ENCODE measurements at regions of chr1 and their contacts with region 1.

Region 1: GRCh38 chr1:19563324-19564097 is 78.2 kb upstream of the CAPZB start:
- DNase-seq: peak; percentile 69 to 86 (median 81)
- ATAC-seq: peak; percentile 83 to 88 (median 86)
- H3K4me3 ChIP-seq: peak overlapping the region in 10 of 12 donors; percentile 6 to 48 (median 41)
- H3K27ac ChIP-seq: peak overlapping the region; percentile 29 to 89 (median 80)
- H3K4me1 ChIP-seq: peaks cover 3 to 30% (median 16%) of the 10 kb centered on the region in 12 donors
- H3K27me3 ChIP-seq: no peaks in the 10 kb centered on the region
- CTCF ChIP-seq: no peak
- POLR2A ChIP-seq: peak in 1 of 2 donors; percentile 26

Region 2: DNA sequence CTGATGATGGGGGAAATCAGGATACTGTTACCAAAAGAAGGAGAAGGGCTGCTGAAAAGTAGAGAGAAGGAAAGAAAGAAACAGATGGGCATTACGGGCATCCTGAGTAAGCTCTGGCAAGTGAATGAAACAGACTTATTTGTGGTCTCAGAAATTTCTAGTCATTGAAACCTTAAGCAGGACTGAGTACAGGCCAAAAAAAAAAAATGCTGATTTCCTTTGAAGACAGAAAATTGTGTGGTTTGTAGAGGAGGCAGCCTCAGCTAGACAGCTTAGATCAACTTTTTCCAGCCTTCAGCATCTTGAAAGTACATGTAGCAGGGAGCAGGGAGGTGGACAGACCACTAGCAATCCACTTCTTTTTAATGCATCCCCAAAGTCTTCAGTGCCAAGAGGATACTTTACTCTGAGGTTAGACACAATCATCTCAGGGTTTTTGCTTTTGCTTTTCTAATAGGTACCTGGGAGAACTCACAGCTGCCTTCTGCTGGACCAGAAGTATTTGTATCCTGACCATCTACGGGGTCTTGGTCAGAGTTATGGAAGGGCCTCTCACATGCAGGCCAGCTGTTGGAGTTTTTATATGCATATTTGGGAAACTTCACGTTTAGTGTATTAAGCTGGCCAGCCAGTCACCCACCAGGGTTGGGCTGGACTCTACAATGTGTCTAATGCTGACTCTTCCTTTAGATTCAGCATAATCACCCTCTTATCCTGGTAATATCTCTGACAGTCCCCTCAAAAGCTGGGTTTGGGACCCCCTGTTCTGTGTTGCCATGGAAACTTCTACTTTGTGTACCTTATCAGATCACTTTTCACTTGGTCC is 67.5 kb before region 1 on chr1:
- intact Hi-C with region 1: loop called in 1 of 10 experiments (anchors 10 kb)
- DNase-seq: no peak
- ATAC-seq: peak in 3 of 4 donors; percentile 12 to 30 (median 22)
- H3K4me3 ChIP-seq: no peak overlapping the region
- H3K27ac ChIP-seq: peak overlapping the region; percentile 12 to 95 (median 78)
- H3K4me1 ChIP-seq: peaks cover 0 to 27% (median 22%) of the 10 kb centered on the region in 12 donors
- H3K27me3 ChIP-seq: no peaks in the 10 kb centered on the region
- CTCF ChIP-seq: no peak
- POLR2A ChIP-seq: no peak

Region 3: GRCh38 chr1:19504796-19505692 is 58.5 kb before region 1 on chr1:
- intact Hi-C with region 1: loop called in 3 of 10 experiments (anchors 5 to 10 kb)
- DNase-seq: peak in 3 of 5 donors; percentile 30 to 48 (median 33)
- ATAC-seq: peak; percentile 79 to 89 (median 81)
- H3K4me3 ChIP-seq: peak overlapping the region in 4 of 12 donors; percentile 5 to 24 (median 18)
- H3K27ac ChIP-seq: peak overlapping the region; percentile 68 to 89 (median 81)
- H3K4me1 ChIP-seq: peaks cover 14 to 68% (median 37%) of the 10 kb centered on the region in 12 donors
- H3K27me3 ChIP-seq: no peaks in the 10 kb centered on the region
- CTCF ChIP-seq: no peak
- POLR2A ChIP-seq: no peak

Region 4: GRCh38 chr1:19514391-19514831 is 49.1 kb before region 1 on chr1:
- intact Hi-C with region 1: loop called in 3 of 10 experiments (anchors 5 to 10 kb)
- DNase-seq: peak; percentile 54 to 73 (median 68)
- ATAC-seq: peak; percentile 84 to 88 (median 86)
- H3K4me3 ChIP-seq: no peak overlapping the region
- H3K27ac ChIP-seq: peak overlapping the region in 11 of 12 donors; percentile 36 to 85 (median 54)
- H3K4me1 ChIP-seq: peaks cover 0 to 37% (median 2%) of the 10 kb centered on the region in 12 donors
- H3K27me3 ChIP-seq: no peaks in the 10 kb centered on the region
- CTCF ChIP-seq: no peak
- POLR2A ChIP-seq: no peak

Region 5: DNA sequence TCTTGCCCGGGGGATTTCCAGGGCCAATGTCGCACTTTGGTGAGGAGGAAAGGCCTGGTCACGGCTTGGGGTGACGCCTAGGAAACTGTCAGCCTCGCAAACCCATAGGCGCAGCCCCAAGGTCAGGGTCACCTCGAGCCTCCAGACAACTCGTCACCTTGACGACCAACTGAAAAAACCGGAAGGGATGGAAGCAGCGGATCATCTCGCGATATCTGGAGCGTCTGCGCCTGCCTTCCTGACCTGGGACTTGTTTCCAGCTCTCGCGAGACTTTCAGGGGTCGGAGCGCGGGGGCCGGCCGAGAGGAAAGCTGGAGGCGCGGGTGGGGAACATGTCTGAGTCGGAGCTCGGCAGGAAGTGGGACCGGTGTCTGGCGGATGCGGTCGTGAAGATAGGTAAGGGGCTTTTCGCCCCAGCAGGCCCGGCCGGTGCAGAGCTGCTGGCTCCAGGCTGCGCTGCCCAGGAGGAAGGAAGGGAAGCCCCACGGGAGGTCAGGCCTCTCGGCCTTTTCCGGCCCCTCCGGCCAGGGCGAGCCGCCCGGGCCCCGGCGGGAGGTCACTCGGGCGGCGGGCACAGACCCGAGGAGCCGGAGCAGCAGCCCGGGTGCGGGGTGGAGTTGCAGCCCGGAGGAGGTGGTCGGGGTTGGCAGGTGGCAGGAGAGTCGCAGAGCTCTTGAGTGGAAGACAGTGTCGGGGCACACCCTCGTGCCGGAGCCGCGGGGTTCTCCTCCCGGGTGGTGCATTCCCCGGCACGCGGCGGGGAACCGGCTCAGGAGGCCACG is 33.4 kb after region 1 on chr1:
- intact Hi-C with region 1: loop called in 1 of 10 experiments (anchors 2 kb)
- DNase-seq: peak; percentile 97 to 98 (median 98)
- ATAC-seq: peak; percentile 90 to 95 (median 94)
- H3K4me3 ChIP-seq: peak overlapping the region; percentile 63 to 95 (median 88)
- H3K27ac ChIP-seq: peak overlapping the region; percentile 91 to 98 (median 96)
- H3K4me1 ChIP-seq: peaks cover 0 to 51% (median 35%) of the 10 kb centered on the region in 12 donors
- H3K27me3 ChIP-seq: no peaks in the 10 kb centered on the region
- CTCF ChIP-seq: no peak
- POLR2A ChIP-seq: peak in 1 of 2 donors; percentile 74

Region 6: GRCh38 chr1:19811206-19811851 is 247.8 kb after region 1 on chr1:
- intact Hi-C with region 1: no loop called
- DNase-seq: peak in 1 of 5 donors; percentile 35
- ATAC-seq: peak in 1 of 4 donors; percentile 36
- H3K4me3 ChIP-seq: no peak overlapping the region
- H3K27ac ChIP-seq: no peak overlapping the region
- H3K4me1 ChIP-seq: no peaks in the 10 kb centered on the region
- H3K27me3 ChIP-seq: no peaks in the 10 kb centered on the region
- CTCF ChIP-seq: peak in 10 of 12 donors; percentile 16 to 52 (median 40)
- POLR2A ChIP-seq: no peak

Measured in heart left ventricle (tissue), 16 donors.